Caco-2 (cell line): ENCODE measurements at regions of chr3 and their contacts with region 1.

Region 1: DNA sequence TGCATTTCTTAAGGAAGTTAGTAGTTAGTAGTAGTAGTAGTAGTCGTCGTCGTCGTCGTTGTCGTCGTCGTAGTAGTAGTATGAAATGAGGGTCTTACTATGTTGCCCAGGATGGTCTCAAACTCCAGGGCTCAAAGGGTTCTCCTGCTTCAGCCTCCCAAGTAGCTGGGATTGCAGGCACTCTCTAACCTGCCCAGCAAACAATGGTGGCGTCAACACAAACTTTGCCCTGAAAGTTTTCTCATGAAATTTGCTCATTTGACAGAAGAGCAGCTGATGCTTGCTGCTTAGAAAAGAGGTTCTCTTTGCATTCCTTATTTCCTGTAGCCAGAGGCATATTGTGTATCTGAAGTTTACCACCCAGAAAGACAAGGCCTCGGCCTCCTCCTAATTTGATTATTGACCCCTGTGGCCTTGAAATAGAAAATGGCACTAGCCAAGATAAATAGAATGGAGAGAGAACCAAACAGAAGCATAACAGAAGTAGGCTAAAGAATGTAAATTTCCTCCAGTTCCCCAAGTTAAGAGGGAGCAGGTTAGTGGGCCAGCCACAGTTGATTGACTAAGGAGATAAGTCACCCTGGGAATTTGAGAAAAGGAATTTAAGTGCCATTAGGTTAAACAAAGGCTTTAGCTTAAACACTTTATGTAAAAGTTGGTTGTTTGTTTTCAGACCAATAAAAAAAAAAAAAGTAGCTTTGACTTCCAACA is 166.2 kb upstream of the ROBO2 start:
- DNase-seq: peak; percentile 22 to 47
- H3K4me3 ChIP-seq: no peak overlapping the region
- H3K4me3 Mint-ChIP-seq: peak overlapping the region; percentile 47
- H3K27ac Mint-ChIP-seq: peak overlapping the region; percentile 75
- H3K4me1 ChIP-seq: peaks cover 27% of the 10 kb centered on the region
- H3K4me1 Mint-ChIP-seq: peaks cover 13% of the 10 kb centered on the region
- H3K27me3 ChIP-seq: no peaks in the 10 kb centered on the region
- H3K27me3 Mint-ChIP-seq: no peaks in the 10 kb centered on the region
- CTCF ChIP-seq: no peak

Region 2: DNA sequence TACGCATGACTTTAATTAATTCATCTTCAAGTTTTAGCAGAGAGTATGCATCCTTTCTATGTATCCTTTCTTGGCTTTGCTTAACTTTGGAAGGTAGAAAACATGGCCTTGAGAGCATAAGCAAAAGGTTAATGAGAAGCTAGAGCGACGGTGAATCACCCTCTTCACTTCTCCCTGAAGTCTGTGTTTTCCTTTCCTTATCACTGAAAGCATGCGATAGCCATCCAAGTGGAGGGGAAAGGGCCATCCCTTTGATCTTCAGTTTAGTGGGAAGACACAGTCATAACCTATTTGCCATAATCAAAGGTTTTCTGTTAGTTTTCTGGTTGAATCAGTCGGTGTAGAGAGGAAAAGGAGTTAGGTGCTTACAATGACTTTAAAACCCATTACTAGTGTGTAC is 187.8 kb before region 1 on chr3:
- CTCF ChIA-PET with region 1: no interaction called
- POLR2A ChIA-PET with region 1: interaction called, 7 read pairs
- intact Hi-C with region 1: loop called (anchors 10 kb)
- DNase-seq: peak; percentile 68 to 72
- H3K4me3 ChIP-seq: no peak overlapping the region
- H3K4me3 Mint-ChIP-seq: peak overlapping the region; percentile 28
- H3K27ac Mint-ChIP-seq: no peak overlapping the region
- H3K4me1 ChIP-seq: peaks cover 17% of the 10 kb centered on the region
- H3K4me1 Mint-ChIP-seq: peaks cover 9% of the 10 kb centered on the region
- H3K27me3 ChIP-seq: no peaks in the 10 kb centered on the region
- H3K27me3 Mint-ChIP-seq: no peaks in the 10 kb centered on the region
- CTCF ChIP-seq: no peak

Region 3: DNA sequence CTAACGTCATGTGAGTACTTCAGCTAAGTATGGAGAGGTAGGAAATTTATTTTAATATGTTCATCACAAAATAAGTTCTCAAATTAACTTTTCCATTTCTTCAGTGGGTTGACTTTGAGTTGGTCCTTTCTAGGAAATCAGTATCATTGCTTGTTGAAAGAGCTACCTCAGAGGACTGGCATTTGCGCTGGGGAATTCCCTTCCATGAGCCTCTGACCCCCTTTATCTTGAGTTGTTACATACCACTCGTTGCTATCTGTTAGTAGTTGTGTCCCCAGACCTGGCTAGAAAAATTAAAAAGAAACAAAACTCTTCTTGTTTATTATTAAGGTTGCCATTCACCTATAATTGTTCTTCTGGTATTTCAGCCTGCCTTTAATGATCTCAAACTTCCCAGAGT is 69.4 kb after region 1 on chr3:
- CTCF ChIA-PET with region 1: no interaction called
- POLR2A ChIA-PET with region 1: no interaction called
- intact Hi-C with region 1: loop called (anchors 5 kb)
- DNase-seq: peak; percentile 32 to 61
- H3K4me3 ChIP-seq: no peak overlapping the region
- H3K4me3 Mint-ChIP-seq: peak overlapping the region; percentile 38
- H3K27ac Mint-ChIP-seq: peak overlapping the region; percentile 57
- H3K4me1 ChIP-seq: peaks cover 28% of the 10 kb centered on the region
- H3K4me1 Mint-ChIP-seq: peaks cover 20% of the 10 kb centered on the region
- H3K27me3 ChIP-seq: no peaks in the 10 kb centered on the region
- H3K27me3 Mint-ChIP-seq: no peaks in the 10 kb centered on the region
- CTCF ChIP-seq: no peak

Region 4: DNA sequence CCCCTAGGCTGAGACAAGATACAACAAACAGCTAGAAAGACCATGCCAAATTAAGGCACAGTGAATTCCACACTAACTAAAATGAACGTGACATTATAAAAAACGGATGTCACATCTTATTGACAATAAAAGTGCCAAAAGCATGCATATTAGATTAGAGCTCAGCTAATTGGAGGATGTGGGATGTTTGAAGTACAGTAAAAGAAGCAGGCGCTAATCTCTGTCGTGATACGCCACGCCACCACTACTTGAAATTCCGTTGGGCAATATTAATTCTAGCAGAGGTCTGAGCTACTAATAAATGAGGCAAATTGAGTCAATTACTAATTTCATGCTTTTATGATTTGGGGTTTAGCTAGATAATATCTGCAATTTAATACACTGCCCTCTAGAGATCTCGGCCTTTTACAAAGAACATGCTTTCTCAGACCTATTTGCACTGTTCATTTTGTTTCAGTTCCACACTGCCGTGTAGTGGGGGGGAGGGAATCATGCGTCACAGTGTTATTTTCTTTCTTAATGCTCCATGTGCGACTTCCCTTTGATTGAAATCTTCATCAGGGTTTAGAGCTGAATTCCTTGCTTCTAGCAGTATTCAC is 113.3 kb after region 1 on chr3:
- CTCF ChIA-PET with region 1: no interaction called
- POLR2A ChIA-PET with region 1: no interaction called
- intact Hi-C with region 1: no loop called
- DNase-seq: no peak
- H3K4me3 ChIP-seq: no peak overlapping the region
- H3K4me3 Mint-ChIP-seq: no peak overlapping the region
- H3K27ac Mint-ChIP-seq: no peak overlapping the region
- H3K4me1 ChIP-seq: no peaks in the 10 kb centered on the region
- H3K4me1 Mint-ChIP-seq: no peaks in the 10 kb centered on the region
- H3K27me3 ChIP-seq: no peaks in the 10 kb centered on the region
- H3K27me3 Mint-ChIP-seq: no peaks in the 10 kb centered on the region
- CTCF ChIP-seq: no peak